CD4-positive, alpha-beta T cell (primary cell): ENCODE measurements at regions of chr2 and their contacts with region 1.

Region 1: GRCh38 chr2:157919181-157919580 is 43.1 kb upstream of the ACVR1 start:
- DNase-seq: no peak
- ATAC-seq: no peak
- H3K4me3 ChIP-seq: no peak overlapping the region
- H3K4me3 Mint-ChIP-seq: no peak overlapping the region
- H3K27ac ChIP-seq: no peak overlapping the region
- H3K27ac Mint-ChIP-seq: no peak overlapping the region
- H3K4me1 ChIP-seq: no peaks in the 10 kb centered on the region
- H3K4me1 Mint-ChIP-seq: no peaks in the 10 kb centered on the region
- H3K27me3 ChIP-seq: no peaks in the 10 kb centered on the region
- H3K27me3 Mint-ChIP-seq: no peaks in the 10 kb centered on the region
- CTCF ChIP-seq: no peak

Region 2: DNA sequence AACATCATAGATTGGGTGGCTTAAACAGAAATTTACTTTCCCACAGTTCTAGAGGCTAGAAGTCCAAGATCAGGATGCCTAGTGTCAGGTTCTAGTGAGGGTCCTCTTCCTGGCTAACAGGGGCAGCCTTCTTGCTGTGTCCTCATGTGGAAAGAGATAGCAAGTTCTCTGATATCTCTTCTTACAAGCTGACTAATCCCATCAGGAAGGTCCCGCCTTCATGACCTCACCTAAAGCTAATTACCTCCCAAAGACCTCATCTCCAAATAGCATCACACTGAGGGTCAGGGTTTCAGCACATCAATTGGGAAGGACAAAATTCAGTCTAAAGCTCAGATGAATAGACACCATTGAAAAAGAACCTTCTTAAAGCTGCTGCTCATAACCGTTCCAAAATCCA is 66.0 kb before region 1 on chr2:
- CTCF ChIA-PET with region 1: no interaction called
- POLR2A ChIA-PET with region 1: no interaction called
- intact Hi-C with region 1: loop called in 1 of 2 experiments (anchors 5 kb)
- DNase-seq: no peak
- ATAC-seq: no peak
- H3K4me3 ChIP-seq: no peak overlapping the region
- H3K4me3 Mint-ChIP-seq: no peak overlapping the region
- H3K27ac ChIP-seq: no peak overlapping the region
- H3K27ac Mint-ChIP-seq: no peak overlapping the region
- H3K4me1 ChIP-seq: peaks cover 1% of the 10 kb centered on the region
- H3K4me1 Mint-ChIP-seq: peaks cover 23% of the 10 kb centered on the region
- H3K27me3 ChIP-seq: no peaks in the 10 kb centered on the region
- H3K27me3 Mint-ChIP-seq: no peaks in the 10 kb centered on the region
- CTCF ChIP-seq: no peak